ENCODE measurements at regions of chr15 and their contacts with region 1.

Region 1: GRCh38 chr15:90691982-90692773 is 25.0 kb upstream of the BLM start:
- DNase-seq: no peak
- H3K4me3 ChIP-seq: no peak overlapping the region
- H3K27ac ChIP-seq: no peak overlapping the region
- H3K4me1 ChIP-seq: no peaks in the 10 kb centered on the region
- H3K27me3 ChIP-seq: no peaks in the 10 kb centered on the region
- CTCF ChIP-seq: no peak

Region 2: GRCh38 chr15:90501898-90502297 is 190.3 kb before region 1 on chr15:
- CTCF ChIA-PET with region 1: no interaction called
- POLR2A ChIA-PET with region 1: no interaction called
- intact Hi-C with region 1: loop called (anchors 10 kb)
- DNase-seq: no peak
- H3K4me3 ChIP-seq: no peak overlapping the region
- H3K27ac ChIP-seq: no peak overlapping the region
- H3K4me1 ChIP-seq: no peaks in the 10 kb centered on the region
- H3K27me3 ChIP-seq: no peaks in the 10 kb centered on the region
- CTCF ChIP-seq: no peak

Measured in PC-9 (cell line).